Activated T-helper 1 cell treated with anti-CD3 and anti-CD28 coated beads, Interleukin-12 subunit alpha, Interleukin-12 subunit beta, Interleukin-2, Interleukin-4 antibody, amounts not matched to agents 30 ng/mL and 10 ng/mL and 1 ng/mL, durations not matched to agents 14 hours and 24 hours and 36 hours (primary cell): ENCODE measurements at regions of chr9 and their contacts with region 1.

Region 1: GRCh38 chr9:72473474-72474261 is 47.7 kb upstream of the TMC1 start:
- DNase-seq: no peak
- H3K4me3 Mint-ChIP-seq: peak overlapping the region; percentile 60
- H3K27ac Mint-ChIP-seq: peak overlapping the region; percentile 90
- H3K4me1 Mint-ChIP-seq: peaks cover 64% of the 10 kb centered on the region
- H3K27me3 Mint-ChIP-seq: no peaks in the 10 kb centered on the region

Region 2: GRCh38 chr9:72383978-72384709 is 89.5 kb before region 1 on chr9:
- intact Hi-C with region 1: loop called (anchors 2 kb)
- DNase-seq: no peak
- H3K4me3 Mint-ChIP-seq: no peak overlapping the region
- H3K27ac Mint-ChIP-seq: no peak overlapping the region
- H3K4me1 Mint-ChIP-seq: peaks cover 9% of the 10 kb centered on the region
- H3K27me3 Mint-ChIP-seq: peaks cover 4% of the 10 kb centered on the region

Region 3: GRCh38 chr9:72509635-72510034 is 36.0 kb after region 1 on chr9:
- intact Hi-C with region 1: loop called (anchors 1 kb)
- DNase-seq: no peak
- H3K4me3 Mint-ChIP-seq: peak overlapping the region; percentile 38
- H3K27ac Mint-ChIP-seq: peak overlapping the region; percentile 79
- H3K4me1 Mint-ChIP-seq: peaks cover 20% of the 10 kb centered on the region
- H3K27me3 Mint-ChIP-seq: no peaks in the 10 kb centered on the region

Region 4: GRCh38 chr9:72557549-72557948 is 83.9 kb after region 1 on chr9:
- intact Hi-C with region 1: loop called (anchors 1 kb)
- DNase-seq: peak; percentile 21
- H3K4me3 Mint-ChIP-seq: peak overlapping the region; percentile 3
- H3K27ac Mint-ChIP-seq: peak overlapping the region; percentile 90
- H3K4me1 Mint-ChIP-seq: peaks cover 21% of the 10 kb centered on the region
- H3K27me3 Mint-ChIP-seq: no peaks in the 10 kb centered on the region

Region 5: DNA sequence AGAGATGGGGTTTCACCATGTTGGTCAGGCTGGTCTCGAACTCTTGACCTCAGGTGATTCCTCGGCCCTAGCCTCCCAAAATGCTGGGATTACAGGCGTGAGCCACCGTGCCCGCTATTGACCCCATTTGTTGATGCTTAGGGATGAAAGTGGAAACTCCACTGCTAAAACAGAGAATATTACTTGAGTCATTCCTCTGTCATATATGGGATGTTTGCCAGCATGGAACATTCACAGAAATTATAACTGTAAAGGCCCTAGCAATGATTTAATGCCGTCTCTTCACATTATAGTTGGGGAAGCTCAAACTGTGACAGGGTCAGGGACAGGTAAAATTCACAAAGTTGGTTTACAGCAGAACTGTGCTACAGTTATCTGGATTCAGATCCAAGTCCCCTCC is 142.3 kb after region 1 on chr9:
- intact Hi-C with region 1: no loop called
- DNase-seq: no peak
- H3K4me3 Mint-ChIP-seq: no peak overlapping the region
- H3K27ac Mint-ChIP-seq: no peak overlapping the region
- H3K4me1 Mint-ChIP-seq: no peaks in the 10 kb centered on the region
- H3K27me3 Mint-ChIP-seq: peaks cover 8% of the 10 kb centered on the region

Region 6: DNA sequence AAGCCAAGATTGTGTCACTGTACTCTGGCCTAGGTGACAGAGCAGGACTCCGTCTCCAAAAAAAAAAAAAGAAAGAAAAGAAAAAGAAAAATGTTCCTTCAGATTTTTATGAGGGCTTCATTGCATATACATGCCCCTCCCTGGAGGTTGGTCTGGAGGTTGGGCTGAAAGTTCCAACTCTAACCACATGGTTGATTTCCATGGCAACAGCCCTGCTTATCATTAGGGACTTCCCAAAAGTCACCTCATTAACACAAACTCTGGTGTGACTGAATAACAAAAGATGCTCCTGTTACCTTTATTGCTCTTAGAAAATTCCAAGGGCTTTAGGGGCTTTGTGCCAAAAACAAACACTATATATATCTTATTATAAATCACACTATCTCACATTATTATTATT is 161.5 kb after region 1 on chr9:
- intact Hi-C with region 1: loop called (anchors 1 kb)
- DNase-seq: no peak
- H3K4me3 Mint-ChIP-seq: no peak overlapping the region
- H3K27ac Mint-ChIP-seq: no peak overlapping the region
- H3K4me1 Mint-ChIP-seq: peaks cover 15% of the 10 kb centered on the region
- H3K27me3 Mint-ChIP-seq: peaks cover 3% of the 10 kb centered on the region